CD8-positive, alpha-beta memory T cell (primary cell): ENCODE measurements at regions of chr15 and their contacts with region 1.

Region 1: GRCh38 chr15:100341662-100342560 is at the start of gene ADAMTS17:
- DNase-seq: peak; percentile 91 to 96 (median 94)
- H3K4me3 ChIP-seq: peak within 1 kb of the TSS; percentile 67
- H3K4me3 Mint-ChIP-seq: peak within 1 kb of the TSS; percentile 67 to 91 (median 77)
- H3K27ac ChIP-seq: peak within 1 kb of the TSS; percentile 43
- H3K27ac Mint-ChIP-seq: peak within 1 kb of the TSS in 6 of 8 donors; percentile 23 to 93 (median 71)
- H3K4me1 ChIP-seq: peaks cover 9% of the 10 kb centered on the region
- H3K4me1 Mint-ChIP-seq: peaks cover 13 to 30% (median 21%) of the 10 kb centered on the region in 3 donors
- H3K27me3 ChIP-seq: no peaks in the 10 kb centered on the region
- H3K27me3 Mint-ChIP-seq: peaks cover 0 to 5% of the 10 kb centered on the region in 2 donors
- total RNA-seq, gene ADAMTS17: 1.2 to 1.9 TPM

Region 2: GRCh38 chr15:99928429-99928981 is 413.4 kb before region 1 on chr15:
- CTCF ChIA-PET with region 1: interaction called, 75 read pairs
- POLR2A ChIA-PET with region 1: interaction called, 7 read pairs
- DNase-seq: peak; percentile 84 to 90 (median 88)
- H3K4me3 ChIP-seq: peak overlapping the region; percentile 59
- H3K4me3 Mint-ChIP-seq: peak overlapping the region; percentile 85 to 92 (median 89)
- H3K27ac ChIP-seq: peak overlapping the region; percentile 46
- H3K27ac Mint-ChIP-seq: peak overlapping the region; percentile 70 to 96 (median 92)
- H3K4me1 ChIP-seq: peaks cover 17% of the 10 kb centered on the region
- H3K4me1 Mint-ChIP-seq: peaks cover 12 to 24% (median 22%) of the 10 kb centered on the region in 3 donors
- H3K27me3 ChIP-seq: no peaks in the 10 kb centered on the region
- H3K27me3 Mint-ChIP-seq: peaks cover 4 to 5% of the 10 kb centered on the region in 2 donors

Region 3: GRCh38 chr15:100284701-100285100 is 57.2 kb before region 1 on chr15:
- CTCF ChIA-PET with region 1: no interaction called
- POLR2A ChIA-PET with region 1: no interaction called
- DNase-seq: no peak
- H3K4me3 ChIP-seq: no peak overlapping the region
- H3K4me3 Mint-ChIP-seq: no peak overlapping the region
- H3K27ac ChIP-seq: no peak overlapping the region
- H3K27ac Mint-ChIP-seq: no peak overlapping the region
- H3K4me1 ChIP-seq: no peaks in the 10 kb centered on the region
- H3K4me1 Mint-ChIP-seq: peaks cover 0 to under 1% (median 0%) of the 10 kb centered on the region in 3 donors
- H3K27me3 ChIP-seq: no peaks in the 10 kb centered on the region
- H3K27me3 Mint-ChIP-seq: no peaks in the 10 kb centered on the region

Region 4: DNA sequence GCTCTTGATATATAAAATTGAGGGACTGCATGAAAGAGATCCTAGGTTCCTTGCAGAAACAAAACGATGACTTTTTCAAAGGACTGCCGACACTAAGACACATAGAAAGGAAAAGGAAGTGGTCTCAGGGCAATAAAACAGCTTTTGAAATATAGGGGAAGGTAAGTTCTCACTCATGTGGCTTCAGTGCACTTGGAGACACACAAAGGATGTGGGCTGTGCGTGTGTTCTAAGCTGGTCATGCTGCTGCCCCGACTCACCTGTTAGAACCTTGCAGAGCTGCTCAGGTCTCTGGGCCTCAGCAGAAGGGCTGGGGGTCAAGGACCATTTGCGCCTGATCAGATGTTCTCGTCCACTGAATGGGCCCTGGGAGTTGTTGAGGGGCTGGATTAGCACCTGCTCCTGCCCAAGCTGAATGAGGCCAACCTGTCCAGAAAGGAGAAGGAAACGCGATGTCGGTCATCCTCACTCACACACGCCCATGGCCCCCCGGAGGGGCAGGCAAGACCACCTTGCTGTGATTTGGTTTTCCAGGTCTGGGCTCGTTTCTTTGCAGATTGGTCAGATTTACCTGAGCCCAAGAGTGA is 11.2 kb before region 1 on chr15:
- CTCF ChIA-PET with region 1: interaction called, 61 read pairs
- POLR2A ChIA-PET with region 1: interaction called, 10 read pairs
- DNase-seq: peak in 4 of 5 donors; percentile 9 to 75 (median 64)
- H3K4me3 ChIP-seq: peak overlapping the region; percentile 58
- H3K4me3 Mint-ChIP-seq: peak overlapping the region; percentile 60 to 88 (median 76)
- H3K27ac ChIP-seq: no peak overlapping the region
- H3K27ac Mint-ChIP-seq: peak overlapping the region; percentile 45 to 96 (median 84)
- H3K4me1 ChIP-seq: peaks cover 72% of the 10 kb centered on the region
- H3K4me1 Mint-ChIP-seq: peaks cover 67 to 84% (median 77%) of the 10 kb centered on the region in 3 donors
- H3K27me3 ChIP-seq: no peaks in the 10 kb centered on the region
- H3K27me3 Mint-ChIP-seq: no peaks in the 10 kb centered on the region